Sciatic nerve (tissue), 2 donors: ENCODE measurements at regions of chr2 and their contacts with region 1.

Region 1: DNA sequence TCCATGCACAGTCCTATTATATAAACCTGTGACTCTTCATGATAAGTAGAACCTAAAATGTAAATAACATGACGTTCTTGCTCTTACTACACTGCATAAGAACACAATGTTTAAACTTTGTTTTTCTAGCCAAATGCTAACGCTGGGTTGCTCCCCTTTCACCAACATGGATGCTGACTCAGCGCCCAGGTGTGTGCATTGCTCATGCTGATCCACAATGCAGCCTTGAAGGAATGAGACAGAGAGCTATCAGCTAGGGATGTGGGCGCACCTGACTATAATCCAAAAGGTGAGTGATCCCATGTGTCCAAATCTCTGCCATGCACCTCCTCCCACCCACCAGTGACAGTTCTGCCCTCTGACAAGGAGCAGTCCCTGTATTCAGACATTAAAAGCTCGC is 235.0 kb downstream of the IRS1 start:
- DNase-seq: no peak
- ATAC-seq: no peak

Region 2: GRCh38 chr2:224638301-224638823 is 1926.3 kb before region 1 on chr2:
- intact Hi-C with region 1: loop called (anchors 5 kb)
- DNase-seq: no peak
- ATAC-seq: no peak

Region 3: GRCh38 chr2:228180181-228181097 is 1615.8 kb after region 1 on chr2:
- intact Hi-C with region 1: no loop called
- DNase-seq: no peak
- ATAC-seq: peak; percentile 34